ENCODE measurements at regions of chr14 and their contacts with region 1.

Region 1: GRCh38 chr14:96424109-96424989 is 32.4 kb downstream of the AK7 start:
- DNase-seq: peak; percentile 39
- ATAC-seq: peak; percentile 88
- H3K4me3 Mint-ChIP-seq: peak overlapping the region; percentile 79
- H3K27ac Mint-ChIP-seq: no peak overlapping the region
- H3K4me1 Mint-ChIP-seq: peaks cover 21% of the 10 kb centered on the region
- H3K27me3 Mint-ChIP-seq: peaks cover 2% of the 10 kb centered on the region
- CTCF ChIP-seq: peak; percentile 70

Region 2: DNA sequence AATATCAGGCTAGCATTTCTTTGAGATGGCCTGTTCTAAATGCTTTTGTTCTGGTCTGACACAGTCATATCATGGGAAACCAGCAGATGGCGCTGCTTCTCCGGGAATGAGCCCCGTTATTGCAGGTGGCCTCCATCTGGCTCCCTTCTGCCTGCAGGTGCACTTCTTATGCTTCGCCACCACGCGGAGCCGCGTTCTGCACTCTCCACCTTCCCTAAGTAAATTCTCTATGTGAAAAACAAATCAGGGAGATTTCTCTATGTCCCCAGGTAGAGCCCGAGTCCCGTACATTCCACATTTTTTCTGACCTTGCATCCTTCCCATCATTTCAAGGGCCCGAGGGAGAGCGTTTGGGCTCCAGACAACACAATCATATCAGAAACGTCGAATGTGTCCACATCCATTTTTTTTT is 863.3 kb before region 1 on chr14:
- CTCF ChIA-PET with region 1: no interaction called
- POLR2A ChIA-PET with region 1: no interaction called
- intact Hi-C with region 1: loop called (anchors 1 kb)
- DNase-seq: peak; percentile 79
- ATAC-seq: peak; percentile 100
- H3K4me3 Mint-ChIP-seq: no peak overlapping the region
- H3K27ac Mint-ChIP-seq: no peak overlapping the region
- H3K4me1 Mint-ChIP-seq: peaks cover 4% of the 10 kb centered on the region
- H3K27me3 Mint-ChIP-seq: peaks cover 17% of the 10 kb centered on the region
- CTCF ChIP-seq: peak; percentile 71

Region 3: GRCh38 chr14:95993768-95994592 is 430.4 kb before region 1 on chr14:
- CTCF ChIA-PET with region 1: no interaction called
- POLR2A ChIA-PET with region 1: no interaction called
- intact Hi-C with region 1: loop called (anchors 10 kb)
- DNase-seq: no peak
- ATAC-seq: peak; percentile 37
- H3K4me3 Mint-ChIP-seq: no peak overlapping the region
- H3K27ac Mint-ChIP-seq: no peak overlapping the region
- H3K4me1 Mint-ChIP-seq: no peaks in the 10 kb centered on the region
- H3K27me3 Mint-ChIP-seq: peaks cover 24% of the 10 kb centered on the region
- CTCF ChIP-seq: peak; percentile 83

Region 4: GRCh38 chr14:96297000-96297399 is 127.3 kb before region 1 on chr14:
- CTCF ChIA-PET with region 1: interaction called, 31 read pairs
- POLR2A ChIA-PET with region 1: no interaction called
- intact Hi-C with region 1: loop called (anchors 1 kb)
- DNase-seq: no peak
- ATAC-seq: no peak
- H3K4me3 Mint-ChIP-seq: no peak overlapping the region
- H3K27ac Mint-ChIP-seq: no peak overlapping the region
- H3K4me1 Mint-ChIP-seq: no peaks in the 10 kb centered on the region
- H3K27me3 Mint-ChIP-seq: no peaks in the 10 kb centered on the region
- CTCF ChIP-seq: no peak

Region 5: DNA sequence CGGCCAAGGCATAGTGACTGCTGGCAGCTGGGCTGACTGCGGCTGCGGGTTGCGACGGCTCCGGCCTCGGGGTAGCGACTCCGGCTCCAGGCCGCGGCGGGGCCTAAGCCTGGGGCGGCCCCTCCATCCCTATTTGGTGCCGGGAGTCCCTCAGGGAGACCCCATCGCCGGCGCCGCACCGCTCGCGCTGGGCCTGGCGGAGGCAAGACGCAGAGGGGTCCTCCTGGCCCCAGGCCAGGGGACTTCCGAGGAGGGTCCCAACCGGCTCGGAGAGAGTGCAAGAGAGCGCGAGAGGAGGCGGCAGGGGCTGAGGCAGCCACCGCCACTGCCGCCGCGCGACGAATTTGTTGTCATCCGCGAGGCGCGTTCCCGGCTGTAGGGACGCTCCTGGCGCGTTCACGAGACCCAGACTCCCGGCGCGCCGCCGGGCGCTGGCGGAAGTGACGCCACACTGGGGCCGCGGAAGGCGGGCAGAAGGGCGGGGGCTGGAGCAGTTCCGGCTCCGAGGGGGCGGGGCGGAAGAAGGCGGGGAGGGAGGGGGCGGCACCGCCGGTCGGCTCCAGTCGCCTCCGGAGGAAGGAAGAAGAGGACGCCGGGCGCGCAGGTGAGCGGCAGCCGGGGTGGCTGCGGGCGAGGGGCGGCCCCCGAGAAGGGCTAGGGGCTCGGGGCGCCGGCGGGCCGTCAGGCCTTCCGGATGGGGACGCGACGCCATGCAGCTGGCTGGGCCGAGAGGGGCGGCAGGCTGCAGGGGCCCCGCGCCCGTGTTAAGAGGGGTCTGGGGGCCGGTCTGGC is 61.2 kb before region 1 on chr14 and contains the starts of genes ATG2B and GSKIP:
- CTCF ChIA-PET with region 1: no interaction called
- POLR2A ChIA-PET with region 1: no interaction called
- intact Hi-C with region 1: loop called (anchors 1 kb)
- DNase-seq: peak; percentile 97
- ATAC-seq: peak; percentile 85
- H3K4me3 Mint-ChIP-seq: peak within 1 kb of the TSS; percentile 89
- H3K27ac Mint-ChIP-seq: peak within 1 kb of the TSS; percentile 63
- H3K4me1 Mint-ChIP-seq: peaks cover 40% of the 10 kb centered on the region
- H3K27me3 Mint-ChIP-seq: no peaks in the 10 kb centered on the region
- CTCF ChIP-seq: no peak
- total RNA-seq, gene ATG2B: 19.4 and 21.0 TPM in 2 replicates
- total RNA-seq, gene GSKIP: 11.4 and 15.3 TPM in 2 replicates